PC-3 (cell line): ENCODE measurements at regions of chr1 and their contacts with region 1.

Region 1: DNA sequence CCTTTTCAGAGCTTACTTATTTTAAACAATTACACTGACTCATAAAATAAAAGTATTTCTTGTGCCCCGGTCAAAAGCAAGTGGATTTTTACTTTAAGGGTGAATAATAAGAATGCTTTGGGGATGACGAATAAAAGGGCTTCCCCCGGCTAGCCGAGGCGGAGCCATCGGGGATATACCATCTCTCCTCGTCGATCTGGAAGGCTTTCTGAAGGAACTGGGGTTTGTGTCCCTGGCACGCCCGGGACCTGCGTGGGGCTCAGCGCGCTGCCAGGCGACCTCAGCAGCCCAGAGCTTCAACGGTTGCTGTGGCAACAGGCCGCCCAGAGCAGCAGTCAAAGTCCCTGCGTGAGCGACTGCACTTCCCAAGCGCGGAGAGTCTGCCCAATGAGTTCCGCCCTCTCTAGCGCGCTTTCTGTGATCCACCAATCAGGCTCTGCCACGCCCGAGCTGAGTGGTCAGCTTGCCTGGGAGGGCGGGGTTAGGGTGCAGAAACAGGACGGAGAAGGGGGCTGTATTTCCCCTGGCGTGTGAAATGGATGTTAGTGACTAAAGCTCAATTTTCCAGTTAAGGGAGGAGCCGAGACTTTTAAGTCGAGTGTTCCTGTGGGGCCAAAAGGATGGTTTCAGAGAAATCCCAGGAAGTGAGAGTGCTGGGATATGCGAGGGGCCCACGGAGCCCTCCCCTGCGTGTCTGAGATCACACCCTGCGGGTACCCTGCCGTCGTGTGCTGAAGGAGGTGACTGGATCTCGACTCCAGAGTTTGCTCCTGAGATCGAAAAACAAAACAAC is 33.0 kb upstream of the MGST3 start:
- DNase-seq: peak; percentile 98
- ATAC-seq: peak; percentile 97
- H3K4me3 ChIP-seq: peak overlapping the region; percentile 76
- H3K27ac ChIP-seq: peak overlapping the region; percentile 73
- H3K4me1 ChIP-seq: peaks cover 12% of the 10 kb centered on the region
- H3K27me3 ChIP-seq: peaks cover 11% of the 10 kb centered on the region
- CTCF ChIP-seq: no peak

Region 2: GRCh38 chr1:165114022-165114888 is 483.8 kb before region 1 on chr1:
- CTCF ChIA-PET with region 1: no interaction called
- POLR2A ChIA-PET with region 1: no interaction called
- intact Hi-C with region 1: loop called (anchors 1 kb)
- DNase-seq: peak; percentile 91
- ATAC-seq: peak; percentile 27
- H3K4me3 ChIP-seq: no peak overlapping the region
- H3K27ac ChIP-seq: no peak overlapping the region
- H3K4me1 ChIP-seq: peaks cover 14% of the 10 kb centered on the region
- H3K27me3 ChIP-seq: peaks cover 18% of the 10 kb centered on the region
- CTCF ChIP-seq: peak; percentile 95

Region 3: GRCh38 chr1:165392634-165393571 is 205.2 kb before region 1 on chr1:
- CTCF ChIA-PET with region 1: interaction called, 6 read pairs
- POLR2A ChIA-PET with region 1: no interaction called
- intact Hi-C with region 1: loop called (anchors 1 kb)
- DNase-seq: peak; percentile 93
- ATAC-seq: peak; percentile 95
- H3K4me3 ChIP-seq: no peak overlapping the region
- H3K27ac ChIP-seq: no peak overlapping the region
- H3K4me1 ChIP-seq: peaks cover 8% of the 10 kb centered on the region
- H3K27me3 ChIP-seq: peaks cover 42% of the 10 kb centered on the region
- CTCF ChIP-seq: peak; percentile 98

Region 4: GRCh38 chr1:165630629-165631341 is 32.7 kb after region 1 on chr1 and contains the start of gene MGST3:
- CTCF ChIA-PET with region 1: interaction called, 3 read pairs
- POLR2A ChIA-PET with region 1: interaction called, 3 read pairs
- intact Hi-C with region 1: loop called (anchors 1 kb)
- DNase-seq: peak; percentile 97
- ATAC-seq: peak; percentile 81
- H3K4me3 ChIP-seq: peak within 1 kb of the TSS; percentile 90
- H3K27ac ChIP-seq: peak within 1 kb of the TSS; percentile 84
- H3K4me1 ChIP-seq: peaks cover 36% of the 10 kb centered on the region
- H3K27me3 ChIP-seq: no peaks in the 10 kb centered on the region
- CTCF ChIP-seq: no peak
- total RNA-seq, gene MGST3: 117 and 168 TPM in 2 replicates

Region 5: GRCh38 chr1:165666152-165666825 is 68.2 kb after region 1 on chr1:
- CTCF ChIA-PET with region 1: no interaction called
- POLR2A ChIA-PET with region 1: no interaction called
- intact Hi-C with region 1: no loop called
- DNase-seq: no peak
- ATAC-seq: no peak
- H3K4me3 ChIP-seq: no peak overlapping the region
- H3K27ac ChIP-seq: no peak overlapping the region
- H3K4me1 ChIP-seq: no peaks in the 10 kb centered on the region
- H3K27me3 ChIP-seq: no peaks in the 10 kb centered on the region
- CTCF ChIP-seq: no peak

Region 6: GRCh38 chr1:165697881-165698760 is 100.0 kb after region 1 on chr1 and contains the start of gene ALDH9A1:
- CTCF ChIA-PET with region 1: interaction called, 5 read pairs
- POLR2A ChIA-PET with region 1: interaction called, 5 read pairs
- intact Hi-C with region 1: loop called (anchors 1 kb)
- DNase-seq: peak; percentile 92
- ATAC-seq: peak; percentile 85
- H3K4me3 ChIP-seq: peak within 1 kb of the TSS; percentile 97
- H3K27ac ChIP-seq: peak within 1 kb of the TSS; percentile 76
- H3K4me1 ChIP-seq: peaks cover 18% of the 10 kb centered on the region
- H3K27me3 ChIP-seq: no peaks in the 10 kb centered on the region
- CTCF ChIP-seq: peak; percentile 62
- total RNA-seq, gene ALDH9A1: 58.8 and 78.0 TPM in 2 replicates

Region 7: GRCh38 chr1:165755393-165756010 is 157.4 kb after region 1 on chr1:
- CTCF ChIA-PET with region 1: interaction called, 3 read pairs
- POLR2A ChIA-PET with region 1: no interaction called
- intact Hi-C with region 1: loop called (anchors 5 kb)
- DNase-seq: no peak
- ATAC-seq: no peak
- H3K4me3 ChIP-seq: no peak overlapping the region
- H3K27ac ChIP-seq: no peak overlapping the region
- H3K4me1 ChIP-seq: no peaks in the 10 kb centered on the region
- H3K27me3 ChIP-seq: no peaks in the 10 kb centered on the region
- CTCF ChIP-seq: no peak

Region 8: GRCh38 chr1:165914136-165914798 is 316.2 kb after region 1 on chr1:
- CTCF ChIA-PET with region 1: no interaction called
- POLR2A ChIA-PET with region 1: no interaction called
- intact Hi-C with region 1: loop called (anchors 1 kb)
- DNase-seq: peak; percentile 91
- ATAC-seq: peak; percentile 88
- H3K4me3 ChIP-seq: no peak overlapping the region
- H3K27ac ChIP-seq: no peak overlapping the region
- H3K4me1 ChIP-seq: no peaks in the 10 kb centered on the region
- H3K27me3 ChIP-seq: no peaks in the 10 kb centered on the region
- CTCF ChIP-seq: peak; percentile 98